Gastrocnemius medialis (tissue), 4 donors: ENCODE measurements at regions of chr11 and their contacts with region 1.

Region 1: GRCh38 chr11:2428322-2428795 is 16.0 kb downstream of the TRPM5 start:
- DNase-seq: peak in 1 of 2 donors; percentile 50
- ATAC-seq: peak in 1 of 2 donors; percentile 78
- H3K4me3 ChIP-seq: no peak overlapping the region
- H3K27ac ChIP-seq: no peak overlapping the region
- H3K4me1 ChIP-seq: no peaks in the 10 kb centered on the region
- H3K27me3 ChIP-seq: no peaks in the 10 kb centered on the region
- CTCF ChIP-seq: peak; percentile 66 to 88 (median 77)
- POLR2A ChIP-seq: no peak

Region 2: DNA sequence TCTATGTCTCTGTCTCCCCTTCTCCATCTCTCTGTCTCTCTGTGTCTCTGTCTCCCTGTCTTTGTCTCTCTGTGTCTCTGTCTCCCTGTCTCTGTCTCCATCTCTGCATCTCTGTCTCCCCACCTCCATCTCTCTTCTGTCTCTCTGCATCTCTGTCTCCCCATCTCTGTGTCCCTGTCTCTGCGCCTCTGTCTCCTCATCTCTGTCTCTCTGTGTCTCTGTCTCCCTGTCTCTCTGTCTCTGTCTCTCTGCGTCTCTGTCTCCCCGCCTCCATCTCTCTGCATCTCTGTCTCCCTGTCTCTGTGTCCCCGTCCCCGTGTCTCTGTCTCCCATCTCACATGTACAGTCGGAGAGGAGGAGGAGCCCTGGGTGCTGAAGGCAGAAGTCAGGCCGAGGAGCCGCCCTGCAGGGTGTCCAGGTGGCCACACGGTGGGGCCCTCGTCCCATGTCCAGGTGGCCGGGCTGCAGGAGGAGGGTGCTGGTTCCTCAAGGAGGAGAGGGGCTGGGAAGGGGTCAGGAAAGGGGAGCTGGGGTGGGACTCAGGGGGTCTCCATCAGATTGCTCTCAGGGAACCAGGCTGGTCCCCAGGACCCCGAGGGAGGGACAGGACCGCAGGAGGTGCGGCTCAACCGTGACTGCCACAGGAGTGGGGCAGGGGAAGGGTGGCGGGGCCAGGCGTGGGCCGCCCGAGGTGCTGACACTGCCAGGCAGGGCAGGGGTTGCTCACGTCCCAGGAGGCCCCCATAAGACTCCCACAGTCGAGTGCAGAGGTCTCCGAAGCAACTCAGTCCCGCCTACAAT is 231.2 kb before region 1 on chr11:
- in situ Hi-C with region 1: loop called (anchors 10 to 25 kb)
- intact Hi-C with region 1: no loop called
- DNase-seq: peak; percentile 13 to 24
- ATAC-seq: no peak
- H3K4me3 ChIP-seq: no peak overlapping the region
- H3K27ac ChIP-seq: no peak overlapping the region
- H3K4me1 ChIP-seq: no peaks in the 10 kb centered on the region
- H3K27me3 ChIP-seq: peaks cover 0 to 17% (median 14%) of the 10 kb centered on the region in 3 donors
- CTCF ChIP-seq: peak; percentile 29 to 70 (median 66)
- POLR2A ChIP-seq: no peak

Region 3: DNA sequence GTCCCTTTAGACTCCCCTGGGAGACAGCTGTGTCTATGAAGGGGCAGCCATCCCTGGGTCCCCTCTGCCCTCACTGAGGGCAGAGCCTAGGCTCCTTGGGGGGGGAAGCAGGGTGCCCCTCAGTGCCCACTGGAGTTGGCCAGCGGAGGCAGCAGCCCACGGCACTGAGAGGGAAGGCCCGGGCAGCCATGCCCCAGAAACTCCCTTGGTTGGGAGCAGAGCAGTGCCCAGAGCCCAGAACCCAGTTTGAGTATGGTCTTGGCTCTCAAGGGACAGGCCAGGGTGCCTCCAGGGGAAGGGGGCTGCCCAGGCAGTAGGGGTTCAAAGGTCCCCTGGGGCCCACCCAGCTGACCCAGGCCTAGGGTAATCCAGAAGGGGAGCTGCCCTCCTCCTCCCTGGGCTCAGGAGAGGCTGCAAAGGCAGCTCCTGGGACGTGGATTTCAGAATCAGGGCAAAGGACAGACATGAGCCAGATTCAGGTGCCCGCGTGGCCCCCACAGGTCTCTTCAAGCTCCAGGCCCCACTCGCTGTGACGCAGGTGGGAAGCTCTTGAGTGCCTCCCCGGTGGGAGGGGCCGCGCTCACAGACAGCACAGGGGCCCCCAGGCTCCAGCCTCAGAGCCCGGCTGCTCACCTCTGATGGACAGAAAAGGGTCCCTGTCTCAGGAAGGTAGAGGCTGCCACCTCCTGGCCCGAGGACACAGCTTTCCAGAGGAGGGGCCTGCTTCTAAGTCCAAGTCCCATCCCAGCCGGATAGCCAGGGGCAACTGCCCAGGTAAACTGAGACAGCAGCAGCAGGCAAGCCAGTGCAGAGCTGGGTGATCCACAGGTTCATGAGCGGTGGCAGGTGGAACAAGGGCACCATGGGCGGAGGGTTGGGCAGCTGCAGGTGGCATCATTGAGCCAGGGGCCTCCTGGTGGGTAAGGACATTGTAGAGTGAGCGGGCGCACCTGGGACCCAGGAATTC is 129.3 kb before region 1 on chr11:
- in situ Hi-C with region 1: loop called in 3 of 4 experiments (anchors 5 to 10 kb)
- intact Hi-C with region 1: no loop called
- DNase-seq: no peak
- ATAC-seq: no peak
- H3K4me3 ChIP-seq: no peak overlapping the region
- H3K27ac ChIP-seq: no peak overlapping the region
- H3K4me1 ChIP-seq: no peaks in the 10 kb centered on the region
- H3K27me3 ChIP-seq: peaks cover 0 to 4% (median 0%) of the 10 kb centered on the region in 3 donors
- CTCF ChIP-seq: peak in 1 of 5 experiments; percentile 21
- POLR2A ChIP-seq: no peak

Region 4: GRCh38 chr11:2325719-2326118 is 102.6 kb before region 1 on chr11:
- in situ Hi-C with region 1: no loop called
- intact Hi-C with region 1: no loop called
- DNase-seq: peak; percentile 81 to 87
- ATAC-seq: peak; percentile 100
- H3K4me3 ChIP-seq: no peak overlapping the region
- H3K27ac ChIP-seq: peak overlapping the region; percentile 61 to 78 (median 71)
- H3K4me1 ChIP-seq: peaks cover 4 to 5% of the 10 kb centered on the region in 2 donors
- H3K27me3 ChIP-seq: no peaks in the 10 kb centered on the region
- CTCF ChIP-seq: no peak
- POLR2A ChIP-seq: no peak

Region 5: DNA sequence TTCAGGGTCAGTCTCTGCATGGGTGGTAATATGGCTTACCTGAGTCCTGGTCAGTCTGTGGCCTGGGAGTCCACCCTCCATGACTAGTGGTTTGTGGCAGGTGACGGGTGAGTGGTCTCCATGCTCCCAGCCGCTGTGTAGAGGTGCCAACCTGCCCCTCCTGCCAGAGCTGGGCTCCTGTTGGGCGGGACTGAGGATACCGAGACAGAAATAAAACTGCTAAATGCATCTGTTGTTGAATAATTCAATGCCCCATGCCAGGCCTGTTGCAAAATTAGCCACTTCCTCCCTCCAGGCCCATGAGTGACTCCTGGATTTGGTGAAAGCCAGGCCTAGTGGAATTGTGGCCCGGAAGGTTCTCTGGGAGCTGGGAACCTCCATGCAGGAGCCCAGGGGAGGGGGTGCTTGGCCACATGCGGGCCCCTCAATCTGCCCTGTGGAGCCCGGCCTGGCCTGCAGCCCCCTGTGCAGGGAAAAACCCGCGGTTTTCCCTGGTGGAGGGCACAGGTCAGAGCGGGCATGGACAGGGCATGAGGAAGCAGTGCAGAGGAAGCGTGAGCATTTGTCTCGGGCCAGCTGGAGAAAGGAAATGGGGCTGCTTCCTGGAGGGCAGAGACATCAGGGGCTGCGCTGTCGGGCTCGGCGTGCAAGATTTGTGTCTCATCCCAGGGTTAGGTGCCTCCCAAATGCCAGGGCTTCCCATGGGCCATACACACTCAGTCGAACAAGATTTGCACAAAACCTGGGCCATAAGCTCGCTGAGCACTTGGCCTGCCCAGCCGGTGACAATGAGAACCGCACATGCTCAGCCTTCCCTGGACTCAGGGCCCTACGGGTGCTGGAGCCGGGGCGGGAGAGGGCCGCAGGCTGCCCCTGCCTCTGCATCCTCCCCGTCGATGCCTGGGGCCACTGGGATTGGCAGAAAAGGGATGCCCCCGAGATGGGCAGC is 83.3 kb after region 1 on chr11:
- in situ Hi-C with region 1: loop called in 1 of 4 experiments (anchors 10 kb)
- intact Hi-C with region 1: no loop called
- DNase-seq: peak in 1 of 2 donors; percentile 36
- ATAC-seq: peak in 1 of 2 donors; percentile 33
- H3K4me3 ChIP-seq: no peak overlapping the region
- H3K27ac ChIP-seq: no peak overlapping the region
- H3K4me1 ChIP-seq: no peaks in the 10 kb centered on the region
- H3K27me3 ChIP-seq: no peaks in the 10 kb centered on the region
- CTCF ChIP-seq: no peak
- POLR2A ChIP-seq: no peak

Region 6: GRCh38 chr11:2892215-2893020 is 464.1 kb after region 1 on chr11:
- in situ Hi-C with region 1: loop called in 2 of 4 experiments (anchors 10 to 25 kb)
- intact Hi-C with region 1: loop called (anchors 2 kb)
- DNase-seq: no peak
- ATAC-seq: peak in 1 of 2 donors; percentile 25
- H3K4me3 ChIP-seq: peak overlapping the region; percentile 32 to 47 (median 36)
- H3K27ac ChIP-seq: peak overlapping the region in 3 of 4 donors; percentile 23 to 31 (median 29)
- H3K4me1 ChIP-seq: peaks cover 5 to 12% of the 10 kb centered on the region in 2 donors
- H3K27me3 ChIP-seq: no peaks in the 10 kb centered on the region
- CTCF ChIP-seq: peak; percentile 80 to 93 (median 92)
- POLR2A ChIP-seq: no peak